ENCODE measurements at regions of chr3 and their contacts with region 1.

Region 1: GRCh38 chr3:60555684-60556354 is 695.4 kb downstream of the FHIT start:
- DNase-seq: peak in 1 of 2 experiments; percentile 12
- H3K4me3 ChIP-seq: no peak overlapping the region
- H3K27ac ChIP-seq: no peak overlapping the region
- H3K4me1 ChIP-seq: no peaks in the 10 kb centered on the region
- H3K27me3 ChIP-seq: no peaks in the 10 kb centered on the region
- CTCF ChIP-seq: no peak

Region 2: DNA sequence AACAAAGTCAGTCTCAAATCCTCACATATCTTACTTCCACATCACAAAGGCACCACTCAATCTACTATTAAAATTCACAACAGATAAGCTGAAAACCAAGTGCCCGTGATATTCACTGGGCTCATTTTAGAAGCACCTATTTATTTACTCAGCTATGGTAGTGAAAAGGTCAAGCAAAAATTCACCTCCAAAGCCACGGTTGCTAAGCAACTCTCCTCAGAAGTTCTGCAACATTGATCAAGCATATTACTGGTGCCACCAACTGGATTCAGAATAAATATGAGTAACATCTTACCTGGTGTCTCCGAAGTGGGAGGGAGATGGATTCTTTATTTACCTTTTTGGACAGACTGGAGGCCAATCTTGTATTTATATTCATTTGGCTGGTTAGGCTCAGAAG is 19.4 kb before region 1 on chr3:
- CTCF ChIA-PET with region 1: interaction called, 10 read pairs
- POLR2A ChIA-PET with region 1: no interaction called
- intact Hi-C with region 1: no loop called
- DNase-seq: no peak
- H3K4me3 ChIP-seq: no peak overlapping the region
- H3K27ac ChIP-seq: no peak overlapping the region
- H3K4me1 ChIP-seq: no peaks in the 10 kb centered on the region
- H3K27me3 ChIP-seq: no peaks in the 10 kb centered on the region
- CTCF ChIP-seq: no peak

Measured in PC-9 (cell line).